Activated B cell treated with CpG ODN at 0.5 μM for 24 hours (primary cell): ENCODE measurements at regions of chr1 and their contacts with region 1.

Region 1: GRCh38 chr1:5514519-5515183 is 477.6 kb downstream of the NPHP4 start:
- DNase-seq: peak; percentile 56
- ATAC-seq: peak; percentile 52
- H3K4me3 Mint-ChIP-seq: no peak overlapping the region
- H3K27ac Mint-ChIP-seq: no peak overlapping the region
- H3K4me1 Mint-ChIP-seq: no peaks in the 10 kb centered on the region
- H3K27me3 Mint-ChIP-seq: peaks cover 22% of the 10 kb centered on the region
- CTCF ChIP-seq: peak; percentile 100

Region 2: GRCh38 chr1:5745776-5746610 is 231.3 kb after region 1 on chr1:
- CTCF ChIA-PET with region 1: no interaction called
- POLR2A ChIA-PET with region 1: no interaction called
- intact Hi-C with region 1: loop called (anchors 10 kb)
- DNase-seq: peak; percentile 23
- ATAC-seq: peak; percentile 40
- H3K4me3 Mint-ChIP-seq: no peak overlapping the region
- H3K27ac Mint-ChIP-seq: no peak overlapping the region
- H3K4me1 Mint-ChIP-seq: no peaks in the 10 kb centered on the region
- H3K27me3 Mint-ChIP-seq: peaks cover 5% of the 10 kb centered on the region
- CTCF ChIP-seq: no peak

Region 3: GRCh38 chr1:5975133-5975880 is 460.7 kb after region 1 on chr1:
- CTCF ChIA-PET with region 1: interaction called, 28 read pairs
- POLR2A ChIA-PET with region 1: no interaction called
- intact Hi-C with region 1: no loop called
- DNase-seq: no peak
- ATAC-seq: peak; percentile 66
- H3K4me3 Mint-ChIP-seq: no peak overlapping the region
- H3K27ac Mint-ChIP-seq: no peak overlapping the region
- H3K4me1 Mint-ChIP-seq: peaks cover 4% of the 10 kb centered on the region
- H3K27me3 Mint-ChIP-seq: no peaks in the 10 kb centered on the region
- CTCF ChIP-seq: no peak

Region 4: DNA sequence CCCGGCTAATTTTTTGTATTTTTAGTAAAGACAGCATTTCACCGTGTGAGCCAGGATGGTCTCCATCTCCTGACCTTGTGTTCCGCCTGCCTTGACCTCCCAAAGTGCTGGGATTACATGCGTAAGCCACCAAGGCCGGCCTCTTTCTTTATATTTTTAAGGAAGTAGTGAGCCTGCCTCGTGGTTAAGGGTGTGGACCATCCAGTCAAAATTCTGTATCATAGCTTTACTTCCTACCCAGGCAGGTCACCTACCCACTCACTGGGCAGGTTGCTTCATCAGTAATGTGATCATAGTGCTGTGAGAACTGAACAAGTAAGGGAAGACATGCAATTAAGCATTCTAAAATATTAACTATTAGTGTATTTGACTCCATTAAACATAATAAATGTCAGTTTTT is 887.0 kb after region 1 on chr1:
- CTCF ChIA-PET with region 1: no interaction called
- POLR2A ChIA-PET with region 1: no interaction called
- intact Hi-C with region 1: loop called (anchors 10 kb)
- DNase-seq: no peak
- ATAC-seq: no peak
- H3K4me3 Mint-ChIP-seq: no peak overlapping the region
- H3K27ac Mint-ChIP-seq: no peak overlapping the region
- H3K4me1 Mint-ChIP-seq: no peaks in the 10 kb centered on the region
- H3K27me3 Mint-ChIP-seq: peaks cover 11% of the 10 kb centered on the region
- CTCF ChIP-seq: no peak